ENCODE measurements at regions of chr3 and their contacts with region 1.

Region 1: DNA sequence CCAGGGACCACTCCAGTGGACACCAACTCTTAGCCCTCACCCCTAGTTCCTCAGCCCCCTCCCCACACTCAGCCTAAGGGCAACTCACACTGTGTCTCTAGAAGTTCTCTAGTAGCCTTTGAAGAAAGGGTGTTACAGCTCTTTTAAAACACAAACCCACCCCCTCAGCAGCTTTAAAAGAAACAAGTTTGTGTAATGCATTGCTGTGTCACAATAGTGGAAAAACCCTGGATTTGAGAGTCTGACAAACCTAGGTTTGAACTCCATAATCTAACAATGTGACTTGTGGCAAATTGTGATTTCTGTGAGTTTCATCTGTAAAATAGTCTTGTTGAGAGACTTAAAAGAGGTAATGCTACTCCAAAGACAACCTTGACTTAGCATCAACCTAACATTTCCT is 54.0 kb downstream of the PLCH1 start:
- DNase-seq: no peak
- H3K4me3 ChIP-seq: no peak overlapping the region
- H3K27ac ChIP-seq: no peak overlapping the region
- H3K4me1 ChIP-seq: no peaks in the 10 kb centered on the region
- H3K27me3 ChIP-seq: no peaks in the 10 kb centered on the region
- CTCF ChIP-seq: no peak
- POLR2A ChIP-seq: no peak

Region 2: DNA sequence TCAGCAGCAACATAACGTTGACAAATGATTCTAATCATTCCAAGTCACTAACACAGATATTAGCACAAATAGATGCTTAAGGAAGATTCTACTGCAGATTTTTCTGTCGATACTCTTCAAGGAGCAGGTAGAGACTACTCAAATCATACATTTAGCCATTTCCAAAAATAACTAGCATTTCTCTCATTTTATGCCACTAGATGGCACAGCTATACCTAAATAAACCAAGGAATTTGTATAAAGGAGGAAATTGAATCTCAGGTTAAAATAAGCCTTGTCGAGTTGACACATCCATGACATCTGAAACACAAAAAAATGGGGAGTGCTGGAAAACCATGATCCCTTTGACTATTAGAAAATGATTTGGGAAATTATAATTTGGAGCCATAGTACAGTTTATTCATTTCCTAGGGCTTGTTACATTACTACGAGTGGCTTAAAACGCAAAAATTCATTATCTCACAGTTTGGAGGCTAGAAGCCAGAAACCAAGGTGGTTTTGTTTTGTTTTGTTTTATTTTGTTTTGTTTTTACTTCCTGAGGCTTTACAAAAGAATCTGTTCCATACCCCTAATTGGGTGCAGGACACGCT is 337.9 kb before region 1 on chr3:
- intact Hi-C with region 1: loop called (anchors 10 kb)
- DNase-seq: no peak
- H3K4me3 ChIP-seq: no peak overlapping the region
- H3K27ac ChIP-seq: no peak overlapping the region
- H3K4me1 ChIP-seq: no peaks in the 10 kb centered on the region
- H3K27me3 ChIP-seq: no peaks in the 10 kb centered on the region
- CTCF ChIP-seq: peak in 2 of 3 experiments; percentile 39 to 56
- POLR2A ChIP-seq: no peak